ENCODE measurements at regions of chr1 and their contacts with region 1.

Region 1: GRCh38 chr1:3746830-3747521 is 5.3 kb upstream of the CCDC27 start:
- DNase-seq: peak; percentile 86 to 92
- H3K4me3 ChIP-seq: peak overlapping the region; percentile 63 to 96
- H3K27ac ChIP-seq: peak overlapping the region; percentile 75 to 81
- H3K4me1 ChIP-seq: peaks cover 0 to 36% (median 21%) of the 10 kb centered on the region in 4 donors
- H3K27me3 ChIP-seq: peaks cover 0 to 8% of the 10 kb centered on the region in 2 donors
- CTCF ChIP-seq: no peak

Region 2: DNA sequence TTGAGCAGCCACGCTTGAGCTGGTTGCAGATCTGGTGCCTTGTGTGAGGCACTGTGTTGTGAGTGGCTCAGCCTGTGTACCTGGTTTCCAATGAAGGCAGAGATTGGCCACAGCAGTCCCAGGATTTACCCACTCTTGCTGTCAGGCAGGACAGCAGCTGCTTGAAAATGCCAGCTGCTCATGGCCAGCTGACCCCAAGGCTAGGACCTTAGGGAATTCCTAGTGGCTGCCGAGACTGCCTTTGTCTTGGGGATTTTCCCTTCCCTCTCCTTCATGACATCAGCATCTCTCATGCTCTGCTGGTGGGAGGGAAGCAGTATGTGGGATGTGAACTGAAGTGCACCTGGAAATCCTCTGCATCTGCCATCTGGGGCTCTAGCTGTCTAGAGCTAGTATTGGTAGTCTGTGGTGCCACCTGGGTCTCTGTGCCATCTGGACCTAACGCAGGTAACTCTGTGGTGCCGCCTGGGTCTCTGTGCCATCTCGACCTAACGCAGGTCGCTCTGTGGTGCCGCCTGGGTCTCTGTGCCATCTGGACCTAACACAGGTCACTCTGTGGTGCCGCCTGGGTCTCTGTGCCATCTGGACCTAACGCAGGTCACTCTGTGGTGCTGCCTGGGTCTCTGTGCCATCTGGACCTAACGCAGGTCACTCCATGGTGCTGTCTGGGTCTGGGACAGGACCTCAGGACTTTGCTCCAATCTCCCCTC is 53.2 kb after region 1 on chr1:
- intact Hi-C with region 1: loop called (anchors 10 kb)
- DNase-seq: no peak
- H3K4me3 ChIP-seq: no peak overlapping the region
- H3K27ac ChIP-seq: no peak overlapping the region
- H3K4me1 ChIP-seq: peaks cover 0 to 20% (median 9%) of the 10 kb centered on the region in 4 donors
- H3K27me3 ChIP-seq: peaks cover 0 to 11% of the 10 kb centered on the region in 2 donors
- CTCF ChIP-seq: no peak

Measured in tibial artery (tissue), 4 donors.